ENCODE measurements at regions of chr17 and their contacts with region 1.

Region 1: GRCh38 chr17:78421484-78422266 is 43.2 kb downstream of the PGS1 start:
- DNase-seq: peak; percentile 98
- H3K4me3 ChIP-seq: no peak overlapping the region; a peak in 1 of 4 replicates
- H3K27ac ChIP-seq: no peak overlapping the region
- H3K4me1 ChIP-seq: no peaks in the 10 kb centered on the region
- H3K27me3 ChIP-seq: no peaks in the 10 kb centered on the region
- CTCF ChIP-seq: peak; percentile 100
- EP300 ChIP-seq: no peak
- RAD21 ChIP-seq: peak; percentile 99

Region 2: GRCh38 chr17:78226749-78227399 is 194.8 kb before region 1 on chr17:
- CTCF ChIA-PET with region 1: interaction called, 11 read pairs
- POLR2A ChIA-PET with region 1: interaction called, 3 read pairs
- DNase-seq: no peak
- H3K4me3 ChIP-seq: no peak overlapping the region
- H3K27ac ChIP-seq: peak overlapping the region in 1 of 2 experiments; percentile 98; a peak in 2 of 4 replicates
- H3K4me1 ChIP-seq: peaks cover 8 to 54% of the 10 kb centered on the region in 2 experiments; a peak in 3 of 4 replicates
- H3K27me3 ChIP-seq: peaks cover 11% of the 10 kb centered on the region
- CTCF ChIP-seq: no peak
- EP300 ChIP-seq: no peak
- RAD21 ChIP-seq: no peak

Region 3: GRCh38 chr17:78289802-78290363 is 131.8 kb before region 1 on chr17:
- CTCF ChIA-PET with region 1: interaction called, 64 read pairs
- POLR2A ChIA-PET with region 1: no interaction called
- DNase-seq: peak; percentile 89
- H3K4me3 ChIP-seq: no peak overlapping the region
- H3K27ac ChIP-seq: no peak overlapping the region
- H3K4me1 ChIP-seq: peaks cover 0 to 7% of the 10 kb centered on the region in 2 experiments; a peak in 1 of 4 replicates
- H3K27me3 ChIP-seq: no peaks in the 10 kb centered on the region
- CTCF ChIP-seq: peak; percentile 98
- EP300 ChIP-seq: no peak
- RAD21 ChIP-seq: peak; percentile 96

Region 4: GRCh38 chr17:78324391-78325075 is 97.1 kb before region 1 on chr17:
- CTCF ChIA-PET with region 1: interaction called, 12 read pairs
- POLR2A ChIA-PET with region 1: no interaction called
- DNase-seq: peak; percentile 89
- H3K4me3 ChIP-seq: no peak overlapping the region
- H3K27ac ChIP-seq: peak overlapping the region; percentile 62 to 92
- H3K4me1 ChIP-seq: peaks cover 32 to 33% of the 10 kb centered on the region in 2 experiments; a peak in 3 of 4 replicates
- H3K27me3 ChIP-seq: no peaks in the 10 kb centered on the region
- CTCF ChIP-seq: no peak
- EP300 ChIP-seq: no peak
- RAD21 ChIP-seq: no peak

Region 5: GRCh38 chr17:78390241-78391050 is 31.2 kb before region 1 on chr17:
- CTCF ChIA-PET with region 1: interaction called, 32 read pairs
- POLR2A ChIA-PET with region 1: no interaction called
- DNase-seq: peak; percentile 76
- H3K4me3 ChIP-seq: no peak overlapping the region
- H3K27ac ChIP-seq: peak overlapping the region; percentile 45 to 71; a peak in 3 of 4 replicates
- H3K4me1 ChIP-seq: peaks cover 10 to 30% of the 10 kb centered on the region in 2 experiments; a peak in 3 of 4 replicates
- H3K27me3 ChIP-seq: no peaks in the 10 kb centered on the region
- CTCF ChIP-seq: peak; percentile 41
- EP300 ChIP-seq: peak in 1 of 2 experiments; percentile 75; a peak in 1 of 4 replicates
- RAD21 ChIP-seq: no peak

Region 6: GRCh38 chr17:78448356-78448993 is 26.8 kb after region 1 on chr17:
- CTCF ChIA-PET with region 1: interaction called, 23 read pairs
- POLR2A ChIA-PET with region 1: no interaction called
- DNase-seq: no peak
- H3K4me3 ChIP-seq: no peak overlapping the region
- H3K27ac ChIP-seq: no peak overlapping the region
- H3K4me1 ChIP-seq: peaks cover 0 to 2% of the 10 kb centered on the region in 2 experiments; a peak in 1 of 4 replicates
- H3K27me3 ChIP-seq: no peaks in the 10 kb centered on the region
- CTCF ChIP-seq: peak; percentile 30; the same call in 1 of the 2 replicates
- EP300 ChIP-seq: no peak
- RAD21 ChIP-seq: no peak